Posterior vena cava (tissue), 2 donors: ENCODE measurements at regions of chr1 and their contacts with region 1.

Region 1: GRCh38 chr1:53014791-53015507 is 47.1 kb upstream of the PODN start:
- DNase-seq: peak; percentile 85

Region 2: GRCh38 chr1:52927212-52928014 is 87.5 kb before region 1 on chr1 and contains the start of gene SCP2:
- intact Hi-C with region 1: no loop called
- DNase-seq: peak; percentile 93
- total RNA-seq, gene SCP2: 101 to 137 TPM

Region 3: GRCh38 chr1:53172426-53173128 is 157.6 kb after region 1 on chr1:
- intact Hi-C with region 1: loop called in 1 of 2 experiments (anchors 5 kb)
- DNase-seq: no peak